ENCODE measurements at regions of chr2 and their contacts with region 1.

Region 1: GRCh38 chr2:24827321-24828237 is 34.4 kb downstream of the CENPO start:
- DNase-seq: peak in 4 of 5 donors; percentile 72 to 82 (median 79)
- ATAC-seq: peak; percentile 89 to 95 (median 92)
- H3K4me3 ChIP-seq: no peak overlapping the region
- H3K27ac ChIP-seq: no peak overlapping the region
- H3K4me1 ChIP-seq: peaks cover 0 to 16% (median 11%) of the 10 kb centered on the region in 12 donors
- H3K27me3 ChIP-seq: no peaks in the 10 kb centered on the region
- CTCF ChIP-seq: peak; percentile 80 to 95 (median 90)
- POLR2A ChIP-seq: no peak

Region 2: GRCh38 chr2:24228470-24228869 is 599.1 kb before region 1 on chr2:
- intact Hi-C with region 1: loop called in 1 of 10 experiments (anchors 10 kb)
- DNase-seq: no peak
- ATAC-seq: no peak
- H3K4me3 ChIP-seq: no peak overlapping the region
- H3K27ac ChIP-seq: no peak overlapping the region
- H3K4me1 ChIP-seq: no peaks in the 10 kb centered on the region
- H3K27me3 ChIP-seq: no peaks in the 10 kb centered on the region
- CTCF ChIP-seq: peak in 9 of 12 donors; percentile 20 to 52 (median 36)
- POLR2A ChIP-seq: no peak

Region 3: DNA sequence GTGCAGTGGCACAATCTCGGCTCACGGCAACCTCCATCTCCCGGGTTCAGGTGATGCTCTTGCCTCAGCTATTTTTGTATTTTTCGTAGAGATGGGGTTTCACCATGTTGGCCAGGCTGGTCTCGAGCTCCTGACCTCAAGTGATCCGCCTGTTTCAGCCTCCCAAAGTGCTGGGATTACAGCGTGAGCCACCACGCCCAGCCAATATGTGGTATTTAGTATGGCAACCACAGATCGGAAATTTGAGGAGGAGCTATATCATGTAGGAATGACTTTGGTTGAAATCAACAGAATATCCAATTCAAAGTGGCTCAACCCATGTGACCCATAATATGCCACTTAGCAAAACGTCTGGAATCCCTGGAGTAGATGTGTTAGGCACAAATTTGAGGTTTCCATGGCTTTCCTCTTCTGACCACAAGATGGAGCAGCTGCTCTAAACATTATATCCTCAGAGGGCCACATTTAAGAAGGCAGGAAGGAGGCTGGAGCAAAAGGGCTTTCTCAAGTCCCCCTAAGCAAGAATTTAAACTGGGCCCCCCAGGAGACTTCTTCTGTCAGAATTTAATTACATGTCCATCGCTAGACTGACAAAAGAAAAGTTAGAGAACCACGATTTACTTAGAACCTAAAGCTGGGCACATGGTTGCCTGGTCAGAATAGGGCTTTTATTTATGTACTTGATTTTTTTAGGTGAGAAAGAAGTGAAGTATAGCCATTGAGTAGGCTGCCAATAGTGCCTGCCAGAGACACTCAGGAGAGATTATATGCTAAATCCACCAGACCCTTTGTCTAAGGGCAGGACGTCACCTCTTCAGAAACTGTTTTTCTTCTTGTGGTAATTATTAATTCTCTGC is 417.7 kb before region 1 on chr2:
- intact Hi-C with region 1: loop called (anchors 1 to 5 kb)
- DNase-seq: peak in 2 of 5 donors; percentile 20 to 27
- ATAC-seq: peak in 3 of 4 donors; percentile 73 to 89 (median 78)
- H3K4me3 ChIP-seq: no peak overlapping the region
- H3K27ac ChIP-seq: no peak overlapping the region
- H3K4me1 ChIP-seq: no peaks in the 10 kb centered on the region
- H3K27me3 ChIP-seq: peaks cover 0 to 14% (median 0%) of the 10 kb centered on the region in 9 donors
- CTCF ChIP-seq: peak; percentile 74 to 92 (median 82)
- POLR2A ChIP-seq: no peak

Region 4: GRCh38 chr2:24421668-24422067 is 405.9 kb before region 1 on chr2:
- intact Hi-C with region 1: loop called in 1 of 10 experiments (anchors 2 kb)
- DNase-seq: peak in 4 of 5 donors; percentile 56 to 72 (median 62)
- ATAC-seq: peak; percentile 55 to 85 (median 72)
- H3K4me3 ChIP-seq: no peak overlapping the region
- H3K27ac ChIP-seq: no peak overlapping the region
- H3K4me1 ChIP-seq: peaks cover 0 to 2% (median 0%) of the 10 kb centered on the region in 12 donors
- H3K27me3 ChIP-seq: no peaks in the 10 kb centered on the region
- CTCF ChIP-seq: peak in 11 of 12 donors; percentile 36 to 73 (median 65)
- POLR2A ChIP-seq: no peak

Region 5: DNA sequence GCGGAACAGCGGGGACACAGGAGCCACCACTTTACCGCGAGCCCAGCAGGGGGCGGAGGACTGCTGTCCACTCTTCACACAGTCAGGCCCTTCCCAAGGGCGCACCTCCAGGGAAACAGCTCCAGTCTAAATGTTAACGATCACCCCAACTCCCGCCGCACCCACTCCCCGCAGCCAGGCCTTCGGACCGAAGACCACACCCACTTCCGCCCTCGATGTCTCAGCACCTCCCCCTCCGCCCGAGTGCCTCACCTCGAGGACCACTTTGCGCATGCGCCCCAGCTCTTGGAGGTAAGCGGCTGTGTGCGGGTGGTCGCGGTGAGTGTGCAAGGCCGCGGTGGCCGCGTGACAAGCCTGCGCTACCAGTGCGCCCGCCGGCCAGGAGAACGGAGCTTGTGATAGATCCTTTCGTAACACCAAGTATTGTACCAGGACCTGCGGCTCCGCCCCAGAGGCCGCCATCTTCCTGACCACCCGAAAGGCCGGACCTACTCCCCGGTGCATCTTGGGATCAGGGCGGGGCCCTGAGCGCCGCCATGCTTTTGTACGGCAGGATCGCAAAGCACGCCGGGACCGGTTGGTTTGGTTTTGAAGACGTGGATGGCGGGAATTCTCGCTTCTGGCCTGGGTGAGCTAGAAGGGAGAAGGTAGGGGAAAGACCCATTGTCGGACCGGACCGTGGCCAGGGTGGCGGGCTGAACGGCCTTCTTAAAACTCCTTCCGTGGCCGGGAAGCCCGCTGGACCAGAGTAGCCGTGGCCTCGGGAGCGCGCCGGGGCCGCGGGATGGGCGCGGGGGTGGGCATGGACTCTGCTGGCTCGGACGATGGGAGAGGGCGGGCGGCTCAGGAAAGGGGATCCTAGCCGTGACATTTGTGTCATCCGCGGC is 34.5 kb before region 1 on chr2 and contains the starts of genes CENPO and PTRHD1:
- intact Hi-C with region 1: loop called in 1 of 10 experiments (anchors 5 kb)
- DNase-seq: peak; percentile 95 to 98 (median 97)
- ATAC-seq: peak; percentile 98 to 99 (median 99)
- H3K4me3 ChIP-seq: peak within 1 kb of the TSS; percentile 30 to 97 (median 74)
- H3K27ac ChIP-seq: peak within 1 kb of the TSS; percentile 90 to 100 (median 98)
- H3K4me1 ChIP-seq: peaks cover 0 to 25% (median 5%) of the 10 kb centered on the region in 12 donors
- H3K27me3 ChIP-seq: no peaks in the 10 kb centered on the region
- CTCF ChIP-seq: peak; percentile 40 to 73 (median 62)
- POLR2A ChIP-seq: peak in 1 of 2 donors; percentile 62
- total RNA-seq, gene CENPO: 1.6 to 9.2 (median 2.7) TPM
- total RNA-seq, gene PTRHD1: 12.6 to 37.1 (median 31.1) TPM

Measured in heart left ventricle (tissue), 16 donors.